A673 (cell line): ENCODE measurements at regions of chr14 and their contacts with region 1.

Region 1: GRCh38 chr14:24806061-24806678 is 172.2 kb upstream of the GZMB start:
- DNase-seq: peak; percentile 66
- H3K4me3 ChIP-seq: no peak overlapping the region
- H3K27ac ChIP-seq: no peak overlapping the region
- H3K4me1 ChIP-seq: no peaks in the 10 kb centered on the region
- H3K27me3 ChIP-seq: peaks cover 5% of the 10 kb centered on the region
- CTCF ChIP-seq: peak; percentile 88

Region 2: DNA sequence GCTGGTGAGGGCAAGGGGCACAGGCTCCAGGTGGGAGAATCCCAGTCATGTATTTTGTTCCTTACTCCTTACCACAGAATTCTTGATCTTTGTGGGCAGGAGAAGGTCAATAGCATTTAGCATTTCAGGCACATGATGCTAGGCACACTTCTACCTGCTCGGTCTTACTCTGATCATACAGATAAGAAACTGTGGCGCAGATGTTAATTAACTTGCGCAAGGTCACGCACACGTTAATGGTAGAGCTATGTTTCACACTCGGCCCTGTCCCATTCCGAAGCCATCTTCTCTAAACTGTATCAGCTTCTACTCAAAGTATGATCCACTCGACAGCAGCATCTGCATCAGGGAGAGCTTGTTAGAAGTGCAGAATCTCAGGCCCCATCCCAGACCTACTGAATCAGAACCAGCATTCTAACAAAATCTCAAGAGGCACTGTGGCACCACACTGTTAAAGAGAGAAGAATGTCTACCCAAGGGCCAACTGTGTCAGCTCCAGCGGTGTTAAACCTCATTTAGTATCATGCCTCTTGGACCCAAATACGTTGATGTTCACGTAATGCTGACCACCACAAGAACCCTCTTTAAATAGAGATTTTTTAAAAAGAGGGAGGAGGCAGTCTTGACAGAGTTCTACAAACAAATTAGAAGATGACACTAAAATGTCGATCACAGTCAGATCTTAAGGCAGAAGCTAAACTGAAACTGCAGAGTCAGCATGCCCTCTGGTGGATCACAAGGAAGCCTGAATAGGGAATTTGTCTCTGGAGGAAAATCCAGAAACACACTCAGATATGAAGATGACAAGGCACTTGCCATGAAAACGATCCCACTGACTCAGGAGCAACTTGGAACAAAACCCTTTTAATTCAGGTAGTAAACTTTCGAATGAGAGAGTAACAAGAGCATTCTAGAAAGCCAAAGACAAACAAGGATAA is 236.5 kb after region 1 on chr14:
- CTCF ChIA-PET with region 1: interaction called, 10 read pairs
- POLR2A ChIA-PET with region 1: no interaction called
- intact Hi-C with region 1: loop called (anchors 1 kb)
- DNase-seq: peak; percentile 68
- H3K4me3 ChIP-seq: no peak overlapping the region
- H3K27ac ChIP-seq: no peak overlapping the region
- H3K4me1 ChIP-seq: no peaks in the 10 kb centered on the region
- H3K27me3 ChIP-seq: peaks cover 8% of the 10 kb centered on the region
- CTCF ChIP-seq: peak; percentile 64

Region 3: GRCh38 chr14:25132732-25133422 is 326.7 kb after region 1 on chr14:
- CTCF ChIA-PET with region 1: interaction called, 6 read pairs
- POLR2A ChIA-PET with region 1: no interaction called
- intact Hi-C with region 1: loop called (anchors 2 kb)
- DNase-seq: peak; percentile 75
- H3K4me3 ChIP-seq: no peak overlapping the region
- H3K27ac ChIP-seq: no peak overlapping the region
- H3K4me1 ChIP-seq: no peaks in the 10 kb centered on the region
- H3K27me3 ChIP-seq: peaks cover 7% of the 10 kb centered on the region
- CTCF ChIP-seq: peak; percentile 86

Region 4: GRCh38 chr14:25400607-25401206 is 594.5 kb after region 1 on chr14:
- CTCF ChIA-PET with region 1: interaction called, 4 read pairs
- POLR2A ChIA-PET with region 1: interaction called, 3 read pairs
- intact Hi-C with region 1: loop called (anchors 2 kb)
- DNase-seq: peak; percentile 79
- H3K4me3 ChIP-seq: no peak overlapping the region
- H3K27ac ChIP-seq: no peak overlapping the region
- H3K4me1 ChIP-seq: peaks cover 31% of the 10 kb centered on the region
- H3K27me3 ChIP-seq: peaks cover 8% of the 10 kb centered on the region
- CTCF ChIP-seq: peak; percentile 87